ENCODE measurements at regions of chr11 and their contacts with region 1.

Region 1: DNA sequence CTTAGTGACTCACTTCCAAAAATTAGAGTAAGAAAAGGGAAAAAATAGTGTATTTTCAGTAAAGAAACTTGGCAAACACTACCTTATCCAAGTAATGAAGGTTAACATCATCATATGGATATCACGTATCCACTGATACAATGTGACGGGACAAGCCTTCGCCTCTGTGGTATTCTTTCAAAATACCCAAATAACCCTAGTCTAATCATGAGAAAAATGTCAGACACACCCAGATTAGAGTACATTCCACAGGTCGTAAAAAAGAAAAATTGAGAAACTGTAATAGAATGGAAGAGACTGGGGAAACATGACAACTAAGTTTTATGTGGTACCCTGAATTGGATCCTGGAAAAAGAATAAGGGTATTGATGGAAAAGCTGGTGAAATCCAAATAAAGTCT is 49.0 kb downstream of the NARS2 start:
- DNase-seq: peak in 1 of 2 experiments; percentile 17
- H3K4me3 ChIP-seq: no peak overlapping the region
- H3K4me3 Mint-ChIP-seq: no peak overlapping the region
- H3K27ac Mint-ChIP-seq: peak overlapping the region; percentile 12
- H3K4me1 ChIP-seq: peaks cover 20% of the 10 kb centered on the region
- H3K4me1 Mint-ChIP-seq: peaks cover 16% of the 10 kb centered on the region
- H3K27me3 ChIP-seq: no peaks in the 10 kb centered on the region
- H3K27me3 Mint-ChIP-seq: no peaks in the 10 kb centered on the region
- CTCF ChIP-seq: no peak

Region 2: GRCh38 chr11:78459738-78460137 is 66.0 kb before region 1 on chr11:
- CTCF ChIA-PET with region 1: no interaction called
- POLR2A ChIA-PET with region 1: no interaction called
- intact Hi-C with region 1: loop called (anchors 5 kb)
- DNase-seq: no peak
- H3K4me3 ChIP-seq: no peak overlapping the region
- H3K4me3 Mint-ChIP-seq: no peak overlapping the region
- H3K27ac Mint-ChIP-seq: no peak overlapping the region
- H3K4me1 ChIP-seq: no peaks in the 10 kb centered on the region
- H3K4me1 Mint-ChIP-seq: no peaks in the 10 kb centered on the region
- H3K27me3 ChIP-seq: no peaks in the 10 kb centered on the region
- H3K27me3 Mint-ChIP-seq: no peaks in the 10 kb centered on the region
- CTCF ChIP-seq: no peak